ENCODE measurements at regions of chr3 and their contacts with region 1.

Region 1: DNA sequence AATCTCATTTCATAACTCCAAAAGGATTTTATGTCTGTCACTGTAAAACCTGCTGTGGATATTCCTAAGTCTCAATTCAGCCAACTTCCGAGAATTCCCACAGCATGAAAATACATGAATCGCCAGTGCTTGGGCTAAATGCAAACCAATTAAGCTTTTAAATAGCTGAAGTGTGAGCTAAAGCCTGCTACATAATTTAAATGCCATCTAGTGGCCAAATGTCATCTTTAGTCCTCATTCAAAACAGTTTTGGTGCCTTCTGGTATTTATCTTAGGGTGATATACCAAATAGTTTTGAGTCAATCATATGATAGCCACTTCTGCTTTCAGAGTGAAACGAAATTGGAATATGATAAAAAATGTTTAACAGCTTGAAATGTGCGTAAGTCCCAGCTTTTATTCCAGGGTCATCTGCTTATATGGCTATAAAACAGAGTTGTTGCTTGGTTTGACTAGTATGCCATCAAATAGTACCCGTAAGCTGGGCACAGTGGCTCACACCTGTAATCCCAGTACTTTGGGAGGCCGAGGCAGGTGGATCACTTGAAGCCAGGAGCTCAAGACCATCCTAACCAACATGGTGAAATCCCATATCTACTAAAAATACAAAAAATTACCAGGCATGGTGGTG is 41.8 kb upstream of the CCNL1 start:
- DNase-seq: peak; percentile 63
- H3K4me3 ChIP-seq: no peak overlapping the region
- H3K27ac ChIP-seq: no peak overlapping the region
- H3K4me1 ChIP-seq: peaks cover 14% of the 10 kb centered on the region
- H3K27me3 ChIP-seq: no peaks in the 10 kb centered on the region
- CTCF ChIP-seq: peak; percentile 40 to 41
- POLR2A ChIP-seq: no peak

Region 2: GRCh38 chr3:157159762-157160657 is 41.8 kb before region 1 on chr3 and contains the start of gene CCNL1:
- CTCF ChIA-PET with region 1: interaction called, 30 read pairs
- POLR2A ChIA-PET with region 1: interaction called, 5 read pairs
- dilution Hi-C with region 1: no loop called
- intact Hi-C with region 1: loop called (anchors 1 kb)
- DNase-seq: peak; percentile 96
- H3K4me3 ChIP-seq: peak within 1 kb of the TSS; percentile 41 to 97 (median 66)
- H3K27ac ChIP-seq: peak within 1 kb of the TSS; percentile 94
- H3K4me1 ChIP-seq: peaks cover 50% of the 10 kb centered on the region
- H3K27me3 ChIP-seq: no peaks in the 10 kb centered on the region
- CTCF ChIP-seq: no peak
- POLR2A ChIP-seq: peak; percentile 98
- total RNA-seq, gene CCNL1: 116 and 119 TPM in 2 replicates

Region 3: GRCh38 chr3:157282261-157283191 is 80.8 kb after region 1 on chr3:
- CTCF ChIA-PET with region 1: interaction called, 9 read pairs
- POLR2A ChIA-PET with region 1: no interaction called
- dilution Hi-C with region 1: no loop called
- intact Hi-C with region 1: loop called (anchors 1 kb)
- DNase-seq: peak; percentile 94
- H3K4me3 ChIP-seq: peak overlapping the region in 1 of 3 experiments; percentile 41
- H3K27ac ChIP-seq: peak overlapping the region; percentile 74
- H3K4me1 ChIP-seq: peaks cover 64% of the 10 kb centered on the region
- H3K27me3 ChIP-seq: no peaks in the 10 kb centered on the region
- CTCF ChIP-seq: no peak
- POLR2A ChIP-seq: no peak

Region 4: GRCh38 chr3:157447026-157447694 is 245.4 kb after region 1 on chr3:
- CTCF ChIA-PET with region 1: interaction called, 34 read pairs
- POLR2A ChIA-PET with region 1: no interaction called
- dilution Hi-C with region 1: no loop called
- intact Hi-C with region 1: loop called (anchors 1 kb)
- DNase-seq: peak; percentile 67
- H3K4me3 ChIP-seq: no peak overlapping the region
- H3K27ac ChIP-seq: no peak overlapping the region
- H3K4me1 ChIP-seq: peaks cover 34% of the 10 kb centered on the region
- H3K27me3 ChIP-seq: no peaks in the 10 kb centered on the region
- CTCF ChIP-seq: peak; percentile 47 to 54
- POLR2A ChIP-seq: no peak

Region 5: DNA sequence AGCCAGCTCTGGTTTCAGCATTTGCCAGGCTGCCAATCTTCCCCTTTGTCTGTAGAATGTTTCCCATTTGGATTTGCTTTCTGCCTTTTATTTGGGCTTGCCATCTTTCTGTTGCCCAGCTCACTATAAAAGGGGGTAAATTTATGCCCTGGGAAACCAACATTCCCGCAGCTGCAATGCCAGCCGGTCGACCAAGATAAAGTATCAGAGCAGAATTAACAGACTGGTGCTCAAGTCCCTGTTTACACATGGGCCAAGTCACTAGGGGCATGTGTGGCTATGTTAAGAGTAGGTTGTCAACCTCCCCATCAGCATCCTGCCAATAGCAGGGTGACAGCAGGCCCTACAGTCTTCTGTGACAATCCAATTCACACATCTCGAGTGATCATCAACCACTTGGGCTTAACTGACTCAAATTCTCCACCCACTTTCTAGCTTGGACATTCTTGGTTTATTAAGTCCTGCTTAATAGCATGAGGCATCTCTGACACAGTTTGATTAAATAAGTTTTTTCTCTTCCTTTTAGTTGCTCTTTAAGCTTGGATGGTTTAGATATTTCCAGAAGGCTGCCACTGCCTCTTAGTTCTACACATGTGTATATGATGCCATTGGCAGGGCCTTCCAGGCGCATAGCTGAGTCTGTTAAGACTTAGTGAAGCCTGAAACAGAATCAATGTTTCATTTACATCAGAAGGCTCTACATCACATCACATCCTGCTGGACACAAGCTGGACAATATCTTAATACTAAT is 325.5 kb after region 1 on chr3:
- CTCF ChIA-PET with region 1: interaction called, 65 read pairs
- POLR2A ChIA-PET with region 1: interaction called, 5 read pairs
- dilution Hi-C with region 1: no loop called
- intact Hi-C with region 1: loop called (anchors 1 kb)
- DNase-seq: no peak
- H3K4me3 ChIP-seq: no peak overlapping the region
- H3K27ac ChIP-seq: no peak overlapping the region
- H3K4me1 ChIP-seq: peaks cover 52% of the 10 kb centered on the region
- H3K27me3 ChIP-seq: no peaks in the 10 kb centered on the region
- CTCF ChIP-seq: no peak
- POLR2A ChIP-seq: no peak

Region 6: DNA sequence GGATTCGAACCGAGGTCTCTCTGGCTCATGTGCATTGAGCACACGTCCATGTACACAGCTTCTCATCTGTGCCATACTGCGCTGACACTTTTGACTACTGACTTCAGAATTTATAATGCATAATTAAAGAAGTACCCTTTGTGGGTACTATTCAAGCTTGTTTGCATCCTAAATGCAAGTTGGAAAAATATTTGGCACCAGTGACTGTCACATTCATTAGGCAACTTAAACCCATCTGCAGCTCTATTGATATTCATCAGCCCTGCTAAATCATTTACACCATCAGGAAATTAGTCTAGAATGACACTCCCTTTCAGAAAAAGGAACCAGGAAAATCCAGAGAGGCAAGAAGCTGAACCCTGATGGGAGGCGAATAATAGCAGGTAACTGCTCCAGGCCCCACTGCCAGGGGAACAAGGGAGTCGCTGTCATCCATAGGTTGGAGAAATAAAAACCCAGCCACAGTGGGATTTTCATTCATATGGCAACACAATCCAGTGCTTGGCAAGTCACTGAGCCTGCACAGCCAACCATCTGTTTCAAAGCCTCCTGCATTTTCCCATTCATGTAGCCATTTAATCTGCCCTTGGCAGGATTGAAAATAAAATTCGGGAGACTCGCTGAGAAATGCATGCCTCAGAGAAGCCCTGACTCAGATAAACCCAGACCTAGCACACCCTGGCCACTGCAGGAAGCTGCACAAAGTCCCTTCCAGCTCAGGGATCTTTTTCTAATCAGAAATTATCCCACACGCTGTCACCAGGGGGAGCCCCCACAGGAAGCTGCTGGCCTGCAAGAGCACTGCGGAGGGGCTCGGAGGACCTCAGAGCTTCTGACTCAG is 404.5 kb after region 1 on chr3:
- CTCF ChIA-PET with region 1: interaction called, 13 read pairs
- POLR2A ChIA-PET with region 1: no interaction called
- dilution Hi-C with region 1: no loop called
- intact Hi-C with region 1: no loop called
- DNase-seq: peak; percentile 73
- H3K4me3 ChIP-seq: no peak overlapping the region
- H3K27ac ChIP-seq: no peak overlapping the region
- H3K4me1 ChIP-seq: no peaks in the 10 kb centered on the region
- H3K27me3 ChIP-seq: no peaks in the 10 kb centered on the region
- CTCF ChIP-seq: peak; percentile 85 to 86
- POLR2A ChIP-seq: no peak